Sigmoid colon (tissue), 7 donors: ENCODE measurements at regions of chr18 and their contacts with region 1.

Region 1: GRCh38 chr18:3447895-3448837 is 1.8 kb upstream of the TGIF1 start:
- DNase-seq: peak; percentile 98
- H3K4me3 ChIP-seq: peak overlapping the region; percentile 67 to 82 (median 78)
- H3K27ac ChIP-seq: peak overlapping the region; percentile 97 to 100 (median 99)
- H3K4me1 ChIP-seq: peaks cover 0 to 20% (median 18%) of the 10 kb centered on the region in 4 donors
- H3K27me3 ChIP-seq: no peaks in the 10 kb centered on the region
- CTCF ChIP-seq: no peak
- EP300 ChIP-seq: peak in 2 of 4 donors; percentile 40 to 50
- POLR2A ChIP-seq: peak; percentile 80 to 94

Region 2: DNA sequence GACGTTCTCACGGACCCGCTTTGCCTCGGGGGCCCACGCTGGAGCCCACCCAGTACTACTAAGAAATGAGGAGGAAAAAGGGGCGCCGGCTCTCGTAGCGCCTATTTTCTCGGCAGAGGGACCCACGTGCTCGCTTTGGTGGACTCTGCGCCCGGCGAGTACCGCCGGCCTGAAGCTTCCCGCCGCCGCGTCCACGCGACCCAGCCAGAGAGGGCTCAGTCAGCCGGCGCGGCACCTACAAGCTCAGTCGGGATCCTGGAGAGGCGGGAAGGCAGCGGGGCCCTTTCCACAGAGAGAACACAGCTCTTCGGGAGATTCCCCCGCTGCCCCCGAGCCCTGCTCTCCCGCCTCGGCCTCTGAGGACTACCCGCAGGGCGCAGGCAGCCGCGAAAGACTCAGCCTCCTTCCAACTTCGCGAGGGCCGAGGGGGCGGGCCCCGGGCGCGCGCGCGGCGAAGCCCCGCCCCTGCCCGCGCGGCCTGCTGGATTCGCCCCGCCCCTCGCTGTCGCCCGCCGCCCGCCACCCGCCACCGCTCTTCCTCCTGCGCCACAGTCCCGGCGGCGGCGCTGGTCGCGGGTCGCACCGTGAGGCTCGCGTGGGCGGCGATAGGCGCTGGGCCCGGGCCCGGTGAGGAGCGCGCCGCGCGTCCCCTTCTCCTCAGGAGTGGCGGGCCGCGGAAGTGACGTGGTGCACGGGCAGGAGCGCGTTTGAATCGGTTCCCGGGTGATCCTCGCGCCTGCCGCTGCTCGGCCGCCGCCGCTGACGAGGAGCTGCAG is 792.8 kb before region 1 on chr18 and contains the start of gene SMCHD1:
- intact Hi-C with region 1: loop called (anchors 5 kb)
- DNase-seq: peak; percentile 93
- H3K4me3 ChIP-seq: peak within 1 kb of the TSS; percentile 71 to 97 (median 94)
- H3K27ac ChIP-seq: peak within 1 kb of the TSS; percentile 95 to 99 (median 98)
- H3K4me1 ChIP-seq: peaks cover 0 to 37% (median 29%) of the 10 kb centered on the region in 4 donors
- H3K27me3 ChIP-seq: no peaks in the 10 kb centered on the region
- CTCF ChIP-seq: no peak
- EP300 ChIP-seq: no peak
- POLR2A ChIP-seq: peak; percentile 45 to 82
- total RNA-seq, gene SMCHD1: 69.9 to 101 (median 82.4) TPM

Region 3: GRCh38 chr18:2971741-2972552 is 476.2 kb before region 1 on chr18:
- intact Hi-C with region 1: loop called (anchors 10 kb)
- DNase-seq: peak; percentile 69
- H3K4me3 ChIP-seq: peak overlapping the region in 1 of 4 donors; percentile 20
- H3K27ac ChIP-seq: peak overlapping the region; percentile 44 to 61 (median 48)
- H3K4me1 ChIP-seq: peaks cover 0 to 63% (median 30%) of the 10 kb centered on the region in 4 donors
- H3K27me3 ChIP-seq: no peaks in the 10 kb centered on the region
- CTCF ChIP-seq: no peak
- EP300 ChIP-seq: no peak
- POLR2A ChIP-seq: no peak

Region 4: DNA sequence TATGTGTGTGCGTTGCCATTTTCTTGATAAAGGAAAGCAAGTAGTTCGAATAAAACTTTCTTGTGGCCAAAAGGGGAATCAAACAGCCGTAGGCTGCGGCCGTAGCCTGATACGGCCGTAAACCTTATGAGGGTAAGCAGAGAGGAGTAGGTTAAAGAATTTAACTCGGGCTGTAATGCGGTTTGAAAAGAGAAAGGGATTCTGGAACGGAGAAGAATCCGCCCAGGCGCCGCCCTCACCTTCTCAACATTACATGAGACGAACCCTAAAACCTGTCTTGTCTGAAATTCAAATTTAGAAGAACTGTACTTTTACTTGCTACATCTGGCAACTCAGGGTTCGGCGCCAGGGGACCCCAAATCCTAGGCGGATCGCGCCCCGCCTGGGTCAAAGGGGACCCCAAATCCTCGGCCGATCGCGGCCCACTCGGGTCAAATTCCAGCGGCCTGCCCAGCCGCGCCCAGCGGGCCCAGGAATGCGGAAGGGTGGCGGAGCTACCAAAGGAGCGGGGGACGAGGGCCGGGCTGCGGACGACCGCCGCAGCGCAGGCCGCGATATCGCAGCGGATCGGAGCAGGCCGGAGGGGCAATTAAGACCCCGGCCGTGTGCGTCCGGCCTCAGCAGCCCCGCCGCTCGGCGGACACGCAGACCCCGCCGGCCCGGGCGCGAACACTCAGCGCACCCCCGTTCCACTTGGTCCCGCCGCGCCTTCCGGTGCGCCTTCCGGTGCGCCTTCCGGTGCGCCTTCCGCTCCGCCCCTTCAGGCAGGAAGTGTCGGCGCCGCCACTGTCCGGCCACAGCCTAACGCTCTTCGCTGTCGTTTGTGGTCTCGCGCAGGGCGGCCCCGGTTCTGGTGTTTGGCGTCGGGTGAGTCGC is 186.6 kb before region 1 on chr18 and contains the start of gene MYL12B:
- intact Hi-C with region 1: loop called (anchors 5 kb)
- DNase-seq: peak; percentile 86
- H3K4me3 ChIP-seq: peak within 1 kb of the TSS; percentile 72 to 99 (median 81)
- H3K27ac ChIP-seq: peak within 1 kb of the TSS; percentile 88 to 94 (median 90)
- H3K4me1 ChIP-seq: peaks cover 0 to 60% (median 55%) of the 10 kb centered on the region in 4 donors
- H3K27me3 ChIP-seq: no peaks in the 10 kb centered on the region
- CTCF ChIP-seq: no peak
- EP300 ChIP-seq: no peak
- POLR2A ChIP-seq: peak; percentile 76 to 83
- total RNA-seq, gene MYL12B: 155 to 227 (median 181) TPM

Region 5: GRCh38 chr18:3345885-3346284 is 102.3 kb before region 1 on chr18:
- intact Hi-C with region 1: loop called (anchors 2 kb)
- DNase-seq: peak; percentile 76
- H3K4me3 ChIP-seq: no peak overlapping the region
- H3K27ac ChIP-seq: peak overlapping the region; percentile 41 to 56 (median 50)
- H3K4me1 ChIP-seq: peaks cover 0 to 12% (median 9%) of the 10 kb centered on the region in 4 donors
- H3K27me3 ChIP-seq: no peaks in the 10 kb centered on the region
- CTCF ChIP-seq: no peak
- EP300 ChIP-seq: no peak
- POLR2A ChIP-seq: no peak

Region 6: GRCh38 chr18:3380384-3380961 is 67.7 kb before region 1 on chr18:
- intact Hi-C with region 1: no loop called
- DNase-seq: no peak
- H3K4me3 ChIP-seq: no peak overlapping the region
- H3K27ac ChIP-seq: no peak overlapping the region
- H3K4me1 ChIP-seq: no peaks in the 10 kb centered on the region
- H3K27me3 ChIP-seq: no peaks in the 10 kb centered on the region
- CTCF ChIP-seq: no peak
- EP300 ChIP-seq: no peak
- POLR2A ChIP-seq: no peak

Region 7: DNA sequence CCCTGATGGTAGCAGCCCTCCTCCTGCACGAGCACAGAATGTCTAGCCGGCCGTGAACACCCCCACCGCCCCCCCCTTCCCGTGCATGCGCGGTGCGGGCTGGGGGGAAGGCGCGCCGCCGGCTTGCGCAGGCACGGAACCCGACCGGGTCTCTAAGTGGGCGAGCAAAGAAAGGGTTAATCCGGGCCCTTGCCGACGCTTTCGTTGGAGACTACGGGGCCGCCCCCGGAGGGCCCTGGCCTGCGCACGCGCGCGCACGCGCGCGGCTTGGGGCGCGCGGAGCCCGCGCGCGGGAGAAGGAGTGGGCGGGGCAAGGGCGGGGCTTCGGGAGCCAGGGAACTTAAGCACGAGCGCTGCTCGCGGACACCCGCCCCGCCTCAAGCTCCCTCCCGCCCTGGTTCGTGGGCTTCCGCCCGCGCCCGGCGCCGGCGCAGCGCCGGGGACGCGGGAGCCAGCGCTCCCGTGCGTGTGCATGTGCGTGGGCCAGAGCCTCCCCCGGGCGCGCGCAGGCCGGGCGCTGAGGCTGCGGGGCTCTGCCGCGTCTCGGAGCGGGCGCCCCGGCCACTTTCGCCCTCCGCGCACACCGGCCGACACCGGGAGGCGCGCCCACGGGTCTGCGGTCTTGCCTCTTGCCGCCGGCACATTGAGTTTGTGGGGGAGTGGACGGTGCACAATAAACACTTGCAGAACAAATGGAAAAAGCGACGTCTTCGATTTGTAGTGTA is 1848.0 kb after region 1 on chr18:
- intact Hi-C with region 1: loop called (anchors 2 kb)
- DNase-seq: peak; percentile 98
- H3K4me3 ChIP-seq: peak overlapping the region; percentile 83 to 96 (median 88)
- H3K27ac ChIP-seq: peak overlapping the region; percentile 98 to 100 (median 100)
- H3K4me1 ChIP-seq: peaks cover 0 to 17% (median 12%) of the 10 kb centered on the region in 4 donors
- H3K27me3 ChIP-seq: no peaks in the 10 kb centered on the region
- CTCF ChIP-seq: no peak
- EP300 ChIP-seq: peak in 1 of 4 donors; percentile 19
- POLR2A ChIP-seq: no peak